ENCODE measurements at regions of chr10 and their contacts with region 1.

Region 1: GRCh38 chr10:60733189-60733822 is 45.0 kb upstream of the CDK1 start:
- DNase-seq: peak; percentile 70
- H3K4me3 Mint-ChIP-seq: peak overlapping the region; percentile 89
- H3K27ac Mint-ChIP-seq: peak overlapping the region; percentile 63
- H3K4me1 Mint-ChIP-seq: peaks cover 23% of the 10 kb centered on the region
- H3K27me3 Mint-ChIP-seq: no peaks in the 10 kb centered on the region
- CTCF ChIP-seq: peak; percentile 50

Region 2: DNA sequence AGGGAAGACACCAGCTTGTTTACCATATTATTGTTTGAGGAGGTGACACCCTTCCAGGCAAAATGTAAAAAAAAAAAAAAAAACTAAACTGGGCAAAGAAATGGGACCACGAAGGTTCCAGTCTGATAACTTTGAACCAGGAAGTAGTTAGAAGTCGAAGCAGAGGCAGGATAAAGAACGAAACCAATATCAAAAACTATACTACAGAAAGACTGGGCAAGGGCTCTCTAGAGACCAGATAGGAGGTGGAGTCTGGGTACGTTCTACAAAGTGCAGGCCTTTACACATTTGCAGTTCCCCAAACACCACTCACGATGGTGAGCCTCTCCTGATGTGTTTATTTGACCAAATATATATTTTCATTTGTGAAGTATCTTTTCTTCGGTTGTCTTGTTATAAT is 80.7 kb before region 1 on chr10:
- CTCF ChIA-PET with region 1: interaction called, 4 read pairs
- POLR2A ChIA-PET with region 1: interaction called, 7 read pairs
- intact Hi-C with region 1: loop called (anchors 5 kb)
- DNase-seq: no peak
- H3K4me3 Mint-ChIP-seq: no peak overlapping the region
- H3K27ac Mint-ChIP-seq: no peak overlapping the region
- H3K4me1 Mint-ChIP-seq: no peaks in the 10 kb centered on the region
- H3K27me3 Mint-ChIP-seq: no peaks in the 10 kb centered on the region
- CTCF ChIP-seq: no peak

Region 3: DNA sequence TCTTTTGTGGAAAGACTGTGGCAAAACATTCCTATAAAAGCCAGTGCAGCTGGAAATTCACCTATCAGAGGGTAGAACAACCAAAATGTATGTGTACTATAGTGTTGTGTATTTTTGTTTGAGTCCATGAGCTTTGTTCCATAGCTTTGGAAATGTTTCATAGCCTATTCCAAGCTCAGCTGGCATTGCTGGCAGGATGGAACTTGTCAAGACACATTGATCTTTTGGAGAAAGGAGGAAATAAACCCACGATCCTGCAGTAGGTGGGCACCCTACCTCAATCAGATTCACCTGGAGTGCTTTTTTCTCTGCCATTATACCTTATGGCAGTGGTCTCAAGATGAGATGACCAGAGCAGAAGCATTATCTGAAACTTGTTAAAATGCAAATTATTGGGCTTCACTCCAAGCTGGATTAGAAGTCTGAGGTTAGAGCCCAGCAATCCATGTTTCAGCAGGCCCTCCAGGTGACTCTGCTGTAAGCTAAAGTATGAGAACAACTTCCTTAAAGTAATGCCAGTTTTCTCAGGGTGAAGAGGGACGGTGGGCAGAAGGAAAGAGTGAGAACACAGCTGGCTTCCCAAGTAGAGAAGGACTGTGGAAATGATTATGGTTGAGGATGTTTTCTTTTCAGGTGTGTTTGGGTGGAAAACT is 14.6 kb after region 1 on chr10:
- CTCF ChIA-PET with region 1: interaction called, 7 read pairs
- POLR2A ChIA-PET with region 1: interaction called, 16 read pairs
- intact Hi-C with region 1: no loop called
- DNase-seq: no peak
- H3K4me3 Mint-ChIP-seq: no peak overlapping the region
- H3K27ac Mint-ChIP-seq: no peak overlapping the region
- H3K4me1 Mint-ChIP-seq: peaks cover 9% of the 10 kb centered on the region
- H3K27me3 Mint-ChIP-seq: no peaks in the 10 kb centered on the region
- CTCF ChIP-seq: no peak

Region 4: DNA sequence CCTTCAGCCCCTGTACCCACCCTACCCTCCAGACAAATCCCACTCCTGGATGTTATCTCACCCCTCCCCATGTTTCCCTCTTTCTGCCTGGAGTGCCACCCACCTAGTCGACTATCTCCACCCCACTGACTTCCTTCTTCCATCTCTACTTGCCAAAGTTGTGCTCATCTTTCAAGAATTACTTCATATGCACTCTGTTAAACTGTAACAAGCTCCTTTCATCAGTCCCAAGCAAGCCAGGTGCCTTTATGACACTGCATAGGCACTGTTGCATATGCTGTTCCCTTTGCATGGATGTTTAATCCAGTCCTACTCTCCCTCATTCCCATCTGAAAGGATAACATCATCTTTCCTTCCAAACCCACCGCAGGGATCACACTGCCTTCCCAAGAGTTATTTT is 36.1 kb after region 1 on chr10:
- CTCF ChIA-PET with region 1: interaction called, 11 read pairs
- POLR2A ChIA-PET with region 1: interaction called, 14 read pairs
- intact Hi-C with region 1: no loop called
- DNase-seq: no peak
- H3K4me3 Mint-ChIP-seq: no peak overlapping the region
- H3K27ac Mint-ChIP-seq: no peak overlapping the region
- H3K4me1 Mint-ChIP-seq: peaks cover 21% of the 10 kb centered on the region
- H3K27me3 Mint-ChIP-seq: no peaks in the 10 kb centered on the region
- CTCF ChIP-seq: no peak

Region 5: GRCh38 chr10:61606951-61607907 is 873.9 kb after region 1 on chr10:
- CTCF ChIA-PET with region 1: no interaction called
- POLR2A ChIA-PET with region 1: no interaction called
- intact Hi-C with region 1: loop called (anchors 5 kb)
- DNase-seq: peak; percentile 36
- H3K4me3 Mint-ChIP-seq: no peak overlapping the region
- H3K27ac Mint-ChIP-seq: no peak overlapping the region
- H3K4me1 Mint-ChIP-seq: peaks cover 23% of the 10 kb centered on the region
- H3K27me3 Mint-ChIP-seq: no peaks in the 10 kb centered on the region
- CTCF ChIP-seq: peak; percentile 39